Head of caudate nucleus (tissue), 42 donors: ENCODE measurements at regions of chr6 and their contacts with region 1.

Region 1: DNA sequence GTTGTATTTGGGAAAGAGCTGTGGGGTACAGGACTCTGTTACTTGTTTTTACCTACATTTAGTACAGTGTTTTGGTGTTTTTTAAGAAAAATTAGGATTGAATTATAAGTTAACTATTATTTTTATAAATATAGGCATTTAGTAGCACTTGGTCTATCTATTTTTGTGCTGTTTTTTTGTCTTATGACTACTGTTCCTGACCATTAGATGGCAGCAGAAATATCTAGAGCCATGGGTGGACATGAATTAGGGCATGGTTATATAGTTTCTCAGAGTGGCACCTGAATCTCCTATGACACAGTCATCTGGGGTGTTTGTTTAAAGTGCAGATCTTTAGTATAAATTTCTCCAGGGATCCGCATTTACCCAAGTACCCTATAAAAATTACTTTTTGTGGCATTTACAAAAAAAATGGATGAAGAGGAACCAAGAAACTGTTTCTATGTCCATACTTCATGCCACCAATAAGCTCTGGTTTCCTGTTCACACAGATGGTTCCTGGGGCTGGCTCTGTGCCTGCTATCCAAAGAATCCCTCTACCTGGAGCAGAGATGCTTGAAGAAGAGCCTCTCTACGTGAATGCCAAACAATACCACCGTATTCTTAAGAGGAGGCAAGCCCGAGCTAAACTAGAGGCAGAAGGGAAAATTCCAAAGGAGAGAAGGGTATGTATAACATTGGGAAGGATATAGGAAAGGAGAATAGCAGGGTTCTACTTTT is 19.8 kb downstream of the NFYA start:
- DNase-seq: no peak

Region 2: GRCh38 chr6:41306187-41306854 is 213.7 kb after region 1 on chr6:
- intact Hi-C with region 1: loop called (anchors 10 kb)
- DNase-seq: peak in 28 of 42 donors; percentile 18 to 80 (median 50)

Region 3: GRCh38 chr6:42260972-42261371 is 1168.4 kb after region 1 on chr6:
- intact Hi-C with region 1: no loop called
- DNase-seq: peak in 10 of 42 donors; percentile 7 to 46 (median 17)